ENCODE measurements at regions of chr18 and their contacts with region 1.

Region 1: DNA sequence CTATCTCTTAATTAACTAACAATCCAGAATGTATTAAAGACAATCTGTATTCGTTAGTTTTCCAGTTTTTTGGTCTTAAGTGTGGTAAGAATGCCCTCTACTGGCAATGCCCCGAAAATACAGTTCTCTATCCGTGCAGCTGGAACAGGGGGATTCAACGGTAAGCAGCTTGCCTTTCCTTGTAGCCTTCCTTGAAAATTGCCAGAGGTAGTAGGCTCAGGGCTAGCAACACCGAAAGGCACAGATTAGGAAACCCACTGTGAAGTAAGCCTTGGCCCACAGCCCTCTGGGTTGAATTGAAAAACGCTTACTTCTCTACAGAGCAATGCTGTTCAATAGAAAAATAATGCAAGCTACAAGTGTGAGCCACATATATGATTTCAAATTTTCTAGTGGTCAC is 17.1 kb upstream of the VPS4B start:
- DNase-seq: peak; percentile 70
- ATAC-seq: peak; percentile 95
- H3K4me3 ChIP-seq: no peak overlapping the region
- H3K27ac ChIP-seq: no peak overlapping the region
- H3K4me1 ChIP-seq: no peaks in the 10 kb centered on the region
- H3K27me3 ChIP-seq: peaks cover 7% of the 10 kb centered on the region
- CTCF ChIP-seq: peak; percentile 85
- POLR2A ChIP-seq: no peak
- RAD21 ChIP-seq: peak; percentile 77

Region 2: DNA sequence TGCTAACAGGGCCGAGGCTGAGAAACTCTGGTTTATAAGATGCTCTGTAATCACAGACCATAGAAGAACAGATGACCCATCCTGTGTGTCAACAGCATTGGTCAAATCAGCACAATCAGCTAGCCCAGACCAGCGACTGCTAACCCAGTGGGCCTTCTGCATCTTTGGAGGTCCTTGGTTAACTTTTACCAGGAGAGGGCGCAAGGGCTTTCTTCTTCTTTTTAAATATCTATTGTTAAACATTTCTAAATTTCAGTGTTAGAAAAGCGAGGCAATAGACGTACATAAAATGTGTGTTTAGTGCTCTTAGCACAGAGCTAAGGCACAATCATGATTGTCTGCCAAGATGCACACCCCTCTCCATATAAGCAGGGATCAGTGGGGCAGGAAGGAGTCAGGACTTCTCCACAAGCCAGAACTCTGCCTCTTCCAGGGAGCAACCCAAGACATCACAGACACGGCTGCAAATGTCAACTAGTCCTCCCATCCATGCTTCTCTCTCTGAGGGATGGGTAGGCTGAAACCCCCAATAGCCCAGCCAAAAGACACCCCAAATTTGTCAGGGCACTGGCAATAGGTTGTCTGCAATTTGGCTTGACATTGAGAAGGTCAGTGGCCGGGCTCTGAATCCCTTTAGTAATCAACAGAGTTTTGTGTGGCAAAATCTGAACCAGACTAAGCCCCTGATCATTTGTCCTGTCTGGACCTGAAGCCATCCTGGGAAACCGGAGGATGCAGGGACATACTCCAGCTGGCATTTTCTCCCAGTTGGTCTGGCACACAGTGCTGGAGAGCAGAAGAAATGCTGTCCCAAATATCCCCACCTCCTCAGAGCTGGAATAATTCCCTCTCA is 308.0 kb before region 1 on chr18:
- CTCF ChIA-PET with region 1: interaction called, 5 read pairs
- POLR2A ChIA-PET with region 1: no interaction called
- dilution Hi-C with region 1: no loop called
- in situ Hi-C with region 1: loop called (anchors 5 kb)
- intact Hi-C with region 1: loop called (anchors 2 kb)
- DNase-seq: peak; percentile 59
- ATAC-seq: peak; percentile 81
- H3K4me3 ChIP-seq: no peak overlapping the region
- H3K27ac ChIP-seq: no peak overlapping the region
- H3K4me1 ChIP-seq: no peaks in the 10 kb centered on the region
- H3K27me3 ChIP-seq: peaks cover 14% of the 10 kb centered on the region
- CTCF ChIP-seq: peak; percentile 75
- POLR2A ChIP-seq: no peak
- RAD21 ChIP-seq: peak; percentile 71

Region 3: GRCh38 chr18:63342206-63342605 is 97.1 kb before region 1 on chr18:
- CTCF ChIA-PET with region 1: interaction called, 6 read pairs
- POLR2A ChIA-PET with region 1: no interaction called
- dilution Hi-C with region 1: no loop called
- in situ Hi-C with region 1: no loop called
- intact Hi-C with region 1: loop called (anchors 1 kb)
- DNase-seq: peak; percentile 28
- ATAC-seq: peak; percentile 80
- H3K4me3 ChIP-seq: no peak overlapping the region
- H3K27ac ChIP-seq: no peak overlapping the region
- H3K4me1 ChIP-seq: peaks cover 2% of the 10 kb centered on the region; the same call in 1 of the 2 replicates
- H3K27me3 ChIP-seq: no peaks in the 10 kb centered on the region
- CTCF ChIP-seq: peak; percentile 40
- POLR2A ChIP-seq: no peak
- RAD21 ChIP-seq: peak; percentile 34; the same call in 1 of the 2 replicates

Measured in IMR-90 (cell line).